Breast epithelium (tissue), 4 donors: ENCODE measurements at regions of chr5 and their contacts with region 1.

Region 1: DNA sequence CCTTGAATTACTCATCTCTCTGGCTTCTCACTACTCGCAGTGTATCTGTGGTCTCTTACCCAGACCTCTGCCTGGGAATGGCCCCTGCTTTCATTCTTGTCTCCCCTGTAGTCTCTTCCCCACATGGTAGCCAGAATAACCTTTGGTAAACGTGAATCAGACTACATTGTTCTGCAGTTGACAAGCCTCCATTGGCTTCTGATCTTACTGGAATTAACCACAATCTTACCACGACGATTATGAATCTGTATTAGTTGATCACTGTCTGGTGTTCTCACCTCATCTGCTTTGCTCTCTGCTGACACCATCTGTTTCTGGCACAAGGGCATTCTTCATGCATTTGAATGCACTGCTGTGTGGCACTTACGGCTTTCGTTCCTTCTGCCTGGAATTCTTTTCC is 781.2 kb downstream of the MTRR start:
- DNase-seq: no peak
- H3K4me3 ChIP-seq: no peak overlapping the region
- H3K27ac ChIP-seq: no peak overlapping the region
- H3K4me1 ChIP-seq: no peaks in the 10 kb centered on the region
- H3K27me3 ChIP-seq: no peaks in the 10 kb centered on the region
- CTCF ChIP-seq: no peak
- POLR2A ChIP-seq: no peak

Region 2: GRCh38 chr5:8280711-8281363 is 369.3 kb before region 1 on chr5:
- intact Hi-C with region 1: loop called (anchors 5 kb)
- DNase-seq: no peak
- H3K4me3 ChIP-seq: no peak overlapping the region
- H3K27ac ChIP-seq: no peak overlapping the region
- H3K4me1 ChIP-seq: no peaks in the 10 kb centered on the region
- H3K27me3 ChIP-seq: no peaks in the 10 kb centered on the region
- CTCF ChIP-seq: no peak
- POLR2A ChIP-seq: no peak

Region 3: GRCh38 chr5:9339206-9339818 is 689.1 kb after region 1 on chr5:
- intact Hi-C with region 1: no loop called
- DNase-seq: no peak
- H3K4me3 ChIP-seq: no peak overlapping the region
- H3K27ac ChIP-seq: no peak overlapping the region
- H3K4me1 ChIP-seq: no peaks in the 10 kb centered on the region
- H3K27me3 ChIP-seq: no peaks in the 10 kb centered on the region
- CTCF ChIP-seq: no peak
- POLR2A ChIP-seq: no peak

Region 4: DNA sequence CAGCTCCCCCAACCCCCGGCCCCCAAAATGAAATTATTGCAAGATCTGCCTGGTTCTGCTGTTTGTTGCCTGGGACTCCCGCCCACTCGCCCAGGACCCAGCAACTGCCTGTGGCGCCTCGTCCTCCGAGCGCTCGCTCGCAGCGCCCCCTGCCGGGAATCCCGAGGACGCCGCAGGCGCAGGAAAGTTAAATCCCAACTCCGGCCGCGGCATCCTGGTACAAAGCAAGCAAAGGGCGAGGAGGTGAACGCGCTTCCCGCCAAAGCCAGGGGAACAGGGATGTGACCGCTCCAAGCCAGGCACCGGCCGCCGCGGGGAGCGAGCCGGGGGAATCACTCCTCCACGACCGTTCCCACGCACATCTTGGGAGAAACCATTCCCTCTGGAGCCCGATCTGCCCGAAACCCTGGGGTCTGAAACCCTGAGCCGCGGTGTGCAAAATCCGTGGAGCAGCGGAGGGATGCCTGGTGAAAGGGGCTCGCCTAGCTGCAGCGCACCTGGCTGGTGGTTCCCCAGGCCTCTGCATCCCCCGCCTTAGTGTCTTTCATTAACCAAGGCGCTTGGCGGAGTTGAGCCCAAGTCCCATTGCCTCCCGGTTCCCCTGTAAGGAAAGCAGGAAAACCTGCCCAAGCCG is 894.4 kb after region 1 on chr5:
- intact Hi-C with region 1: loop called (anchors 10 kb)
- DNase-seq: peak; percentile 79 to 87
- H3K4me3 ChIP-seq: peak overlapping the region; percentile 58 to 85 (median 73)
- H3K27ac ChIP-seq: peak overlapping the region; percentile 61 to 87
- H3K4me1 ChIP-seq: no peaks in the 10 kb centered on the region
- H3K27me3 ChIP-seq: no peaks in the 10 kb centered on the region
- CTCF ChIP-seq: peak; percentile 81 to 87 (median 86)
- POLR2A ChIP-seq: no peak

Region 5: DNA sequence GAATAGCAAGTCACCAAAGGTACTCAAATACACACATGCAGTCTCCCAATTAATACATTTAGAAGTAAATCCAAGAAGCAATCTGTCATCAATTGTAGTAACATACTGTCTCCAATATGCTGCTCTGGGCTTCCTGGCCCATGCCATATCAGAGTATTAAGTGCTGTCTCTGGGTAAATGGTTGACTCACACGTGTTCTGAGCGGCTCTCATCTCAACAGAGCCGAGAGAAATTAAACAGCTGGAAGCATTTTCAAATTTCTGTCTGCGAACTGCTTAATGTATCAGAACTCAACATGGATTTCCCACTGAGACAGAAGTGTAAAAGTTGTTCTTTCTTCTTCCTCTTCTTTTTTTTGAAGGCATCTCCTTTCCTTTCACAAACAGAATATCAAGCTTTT is 1227.3 kb after region 1 on chr5:
- intact Hi-C with region 1: no loop called
- DNase-seq: no peak
- H3K4me3 ChIP-seq: no peak overlapping the region
- H3K27ac ChIP-seq: no peak overlapping the region
- H3K4me1 ChIP-seq: no peaks in the 10 kb centered on the region
- H3K27me3 ChIP-seq: no peaks in the 10 kb centered on the region
- CTCF ChIP-seq: no peak
- POLR2A ChIP-seq: no peak